ENCODE measurements at regions of chr17 and their contacts with region 1.

Region 1: GRCh38 chr17:75271233-75271954 is 363 bp upstream of the MIF4GD start:
- DNase-seq: peak; percentile 61 to 84 (median 72)
- H3K4me3 ChIP-seq: peak overlapping the region; percentile 79 to 96 (median 91)
- H3K27ac ChIP-seq: peak overlapping the region in 1 of 2 experiments; percentile 64
- H3K4me1 ChIP-seq: peaks cover 0 to 53% (median 27%) of the 10 kb centered on the region in 4 experiments
- H3K27me3 ChIP-seq: no peaks in the 10 kb centered on the region

Region 2: DNA sequence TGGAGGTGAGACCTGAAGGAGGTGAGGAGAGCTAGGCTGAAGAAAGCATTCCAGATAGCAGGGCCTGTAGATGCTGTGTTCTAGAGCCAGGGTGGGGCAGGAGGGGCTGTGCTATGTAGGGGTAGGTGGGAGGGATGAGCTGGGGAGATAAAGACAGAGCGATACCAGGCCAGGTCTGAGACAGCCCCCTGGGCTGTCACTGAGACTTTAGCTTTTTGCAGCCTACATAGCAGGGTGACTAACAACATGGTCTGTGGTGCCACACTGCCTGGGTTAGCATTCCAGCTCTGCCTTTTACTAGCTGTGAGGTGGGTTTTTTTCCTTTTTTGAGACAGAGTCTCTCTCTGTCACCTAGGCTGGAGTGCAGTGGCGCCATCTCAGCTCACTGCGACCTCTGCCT is 51.6 kb before region 1 on chr17:
- CTCF ChIA-PET with region 1: no interaction called
- POLR2A ChIA-PET with region 1: no interaction called
- DNase-seq: no peak
- H3K4me3 ChIP-seq: no peak overlapping the region
- H3K27ac ChIP-seq: no peak overlapping the region
- H3K4me1 ChIP-seq: no peaks in the 10 kb centered on the region
- H3K27me3 ChIP-seq: no peaks in the 10 kb centered on the region

Region 3: DNA sequence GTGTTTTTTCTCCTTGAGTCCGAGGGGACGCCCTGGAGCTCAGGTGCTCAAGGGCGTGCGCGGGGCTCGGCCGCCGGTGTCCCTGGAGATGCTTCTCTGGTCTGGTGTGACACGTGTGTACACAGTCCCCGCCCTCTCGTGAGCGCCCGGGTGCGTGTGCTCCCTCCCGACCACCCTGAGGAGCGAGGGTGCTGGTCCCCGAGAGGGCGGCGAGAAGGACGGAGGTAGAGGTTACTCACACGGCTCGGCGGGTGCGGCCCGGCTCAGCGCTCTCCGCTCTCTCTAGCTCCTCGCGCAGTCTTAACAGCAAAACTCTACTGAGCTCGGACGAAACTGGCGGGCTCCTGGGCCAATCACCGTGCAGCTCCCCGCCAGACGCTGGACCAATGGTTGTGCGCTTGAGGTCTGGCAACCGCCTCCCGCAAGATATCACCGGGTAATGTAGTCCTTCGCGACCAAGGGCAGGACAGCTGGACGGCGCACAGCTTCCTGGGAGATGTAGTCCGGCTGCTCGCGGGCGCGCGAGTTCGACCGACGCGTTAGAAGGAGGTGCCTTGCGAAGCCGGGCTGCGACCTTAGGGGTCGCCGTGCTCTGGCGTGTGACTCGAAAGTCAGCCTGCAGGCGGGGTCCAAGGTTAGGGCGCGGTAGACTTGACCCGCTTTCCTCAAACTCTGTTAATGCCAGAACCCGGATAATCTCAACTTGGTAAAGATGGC is 17.9 kb after region 1 on chr17 and contains the start of gene SLC25A19:
- CTCF ChIA-PET with region 1: interaction called, 20 read pairs
- POLR2A ChIA-PET with region 1: interaction called, 13 read pairs
- DNase-seq: peak; percentile 99 to 100 (median 99)
- H3K4me3 ChIP-seq: peak within 1 kb of the TSS; percentile 80 to 98 (median 94)
- H3K27ac ChIP-seq: peak within 1 kb of the TSS; percentile 94 to 98
- H3K4me1 ChIP-seq: peaks cover 8 to 34% (median 17%) of the 10 kb centered on the region in 4 experiments
- H3K27me3 ChIP-seq: no peaks in the 10 kb centered on the region

Region 4: DNA sequence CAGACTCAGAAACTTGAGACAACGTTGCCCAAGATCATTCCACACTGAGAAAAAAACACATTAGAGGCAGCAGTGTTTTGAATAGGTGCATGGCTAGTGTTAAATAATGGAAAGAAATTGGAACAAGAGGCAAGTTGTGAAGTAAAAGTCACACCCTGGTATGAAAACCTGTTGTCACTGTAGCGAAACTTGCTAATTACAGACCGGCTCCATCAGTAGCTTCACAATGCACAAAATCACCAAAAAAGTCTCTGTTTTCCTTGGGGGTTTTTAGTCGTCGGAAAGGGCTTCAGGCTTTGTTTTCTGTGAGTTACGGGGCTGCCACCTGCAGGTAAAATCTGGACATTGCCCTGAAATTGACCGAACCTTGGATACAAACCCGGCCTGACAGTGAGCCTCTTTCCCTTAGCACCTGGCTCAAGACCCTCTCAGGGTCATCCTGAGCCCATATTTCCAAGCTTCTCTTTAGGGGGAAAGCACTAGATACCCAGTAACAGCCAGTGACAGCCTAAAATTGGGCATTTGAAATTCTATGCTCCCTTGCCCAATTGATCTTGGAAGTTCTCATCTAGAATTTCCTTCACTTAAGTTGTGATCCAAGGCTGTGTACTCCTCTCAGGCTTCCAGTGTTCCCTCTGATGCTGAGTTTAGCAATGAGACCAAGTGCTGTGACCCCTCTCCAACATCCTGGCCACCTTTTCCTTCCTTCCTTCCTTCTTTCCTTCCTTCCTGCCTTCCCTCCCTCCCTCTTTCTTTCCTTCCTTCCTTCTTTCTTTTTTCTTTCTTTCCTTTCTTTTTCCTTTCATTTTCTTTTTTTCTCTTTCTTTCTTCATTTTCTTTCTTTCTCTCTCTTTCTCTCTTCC is 141.3 kb after region 1 on chr17:
- CTCF ChIA-PET with region 1: interaction called, 19 read pairs
- POLR2A ChIA-PET with region 1: no interaction called
- DNase-seq: peak; percentile 83 to 93 (median 88)
- H3K4me3 ChIP-seq: peak overlapping the region in 3 of 7 experiments; percentile 30 to 63 (median 32)
- H3K27ac ChIP-seq: no peak overlapping the region
- H3K4me1 ChIP-seq: peaks cover 3 to 38% (median 28%) of the 10 kb centered on the region in 4 experiments
- H3K27me3 ChIP-seq: no peaks in the 10 kb centered on the region

Measured in common myeloid progenitor, CD34-positive (primary cell).